CD4-positive, alpha-beta memory T cell (primary cell): ENCODE measurements at regions of chr5 and their contacts with region 1.

Region 1: DNA sequence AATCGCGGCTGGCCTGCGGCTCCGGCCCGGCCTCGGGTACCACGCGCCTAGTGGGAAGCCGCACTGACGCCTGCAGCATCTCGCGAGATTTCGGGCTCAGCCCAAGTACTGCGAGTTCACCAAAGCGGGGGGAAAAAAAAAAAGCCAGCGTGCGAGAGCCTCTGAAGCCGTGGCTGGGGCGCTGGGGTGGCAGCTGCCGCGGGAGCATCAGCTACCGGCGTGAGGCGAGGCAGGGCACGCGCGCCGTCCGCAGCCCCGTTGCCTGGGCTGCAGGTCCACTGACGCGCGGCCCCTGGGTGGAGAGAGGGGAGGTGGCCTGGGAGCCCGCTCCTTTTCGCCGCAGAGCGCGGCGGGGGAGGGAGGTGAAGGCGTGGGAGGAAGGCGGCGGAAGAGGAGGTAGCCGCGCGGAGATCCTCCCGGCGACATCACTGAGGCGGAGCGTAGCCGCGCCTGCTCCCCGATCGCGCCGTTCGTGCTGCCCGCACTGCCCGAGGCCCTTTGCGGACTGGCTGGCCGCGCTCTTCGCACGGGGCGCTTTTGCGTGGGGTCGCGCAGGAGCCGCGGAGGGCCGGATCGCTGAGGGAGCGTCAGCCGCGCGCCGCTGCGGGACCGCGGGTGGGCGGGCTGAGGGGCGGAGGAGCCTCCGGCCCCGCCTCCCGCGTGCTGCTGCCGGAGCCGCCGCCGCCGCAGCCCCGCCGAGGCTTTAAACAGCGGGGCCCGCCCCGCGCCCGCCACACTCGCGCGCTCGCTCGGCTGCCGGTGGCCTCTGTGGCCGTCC is at the start of gene SLC12A2:
- DNase-seq: peak; percentile 94 to 98 (median 97)
- H3K4me3 ChIP-seq: peak within 1 kb of the TSS; percentile 68 to 89
- H3K4me3 Mint-ChIP-seq: peak within 1 kb of the TSS; percentile 89 to 98 (median 94)
- H3K27ac ChIP-seq: peak within 1 kb of the TSS; percentile 88
- H3K27ac Mint-ChIP-seq: peak within 1 kb of the TSS; percentile 87 to 98 (median 97)
- H3K4me1 ChIP-seq: peaks cover 62% of the 10 kb centered on the region
- H3K4me1 Mint-ChIP-seq: peaks cover 51 to 76% (median 61%) of the 10 kb centered on the region in 4 donors
- H3K27me3 ChIP-seq: no peaks in the 10 kb centered on the region
- H3K27me3 Mint-ChIP-seq: no peaks in the 10 kb centered on the region
- total RNA-seq, gene SLC12A2: 13.3 to 13.6 TPM

Region 2: GRCh38 chr5:127030259-127031146 is 1052.7 kb before region 1 on chr5 and contains the start of gene MARCHF3:
- CTCF ChIA-PET with region 1: no interaction called
- POLR2A ChIA-PET with region 1: no interaction called
- intact Hi-C with region 1: loop called (anchors 10 kb)
- DNase-seq: peak; percentile 92 to 95 (median 94)
- H3K4me3 ChIP-seq: peak within 1 kb of the TSS; percentile 51 to 85
- H3K4me3 Mint-ChIP-seq: peak within 1 kb of the TSS; percentile 89 to 94 (median 90)
- H3K27ac ChIP-seq: peak within 1 kb of the TSS; percentile 56
- H3K27ac Mint-ChIP-seq: peak within 1 kb of the TSS; percentile 35 to 91 (median 77)
- H3K4me1 ChIP-seq: peaks cover 16% of the 10 kb centered on the region
- H3K4me1 Mint-ChIP-seq: peaks cover 5 to 17% (median 7%) of the 10 kb centered on the region in 4 donors
- H3K27me3 ChIP-seq: no peaks in the 10 kb centered on the region
- H3K27me3 Mint-ChIP-seq: peaks cover 0 to 17% of the 10 kb centered on the region in 2 donors
- total RNA-seq, gene MARCHF3: 3.2 to 3.3 TPM

Region 3: GRCh38 chr5:127875235-127876021 is 207.8 kb before region 1 on chr5:
- CTCF ChIA-PET with region 1: interaction called, 10 read pairs
- POLR2A ChIA-PET with region 1: interaction called, 8 read pairs
- intact Hi-C with region 1: loop called (anchors 2 kb)
- DNase-seq: peak in 4 of 5 donors; percentile 7 to 10 (median 9)
- H3K4me3 ChIP-seq: no peak overlapping the region
- H3K4me3 Mint-ChIP-seq: no peak overlapping the region
- H3K27ac ChIP-seq: no peak overlapping the region
- H3K27ac Mint-ChIP-seq: no peak overlapping the region
- H3K4me1 ChIP-seq: no peaks in the 10 kb centered on the region
- H3K4me1 Mint-ChIP-seq: no peaks in the 10 kb centered on the region
- H3K27me3 ChIP-seq: no peaks in the 10 kb centered on the region
- H3K27me3 Mint-ChIP-seq: peaks cover 0 to 4% of the 10 kb centered on the region in 2 donors

Region 4: DNA sequence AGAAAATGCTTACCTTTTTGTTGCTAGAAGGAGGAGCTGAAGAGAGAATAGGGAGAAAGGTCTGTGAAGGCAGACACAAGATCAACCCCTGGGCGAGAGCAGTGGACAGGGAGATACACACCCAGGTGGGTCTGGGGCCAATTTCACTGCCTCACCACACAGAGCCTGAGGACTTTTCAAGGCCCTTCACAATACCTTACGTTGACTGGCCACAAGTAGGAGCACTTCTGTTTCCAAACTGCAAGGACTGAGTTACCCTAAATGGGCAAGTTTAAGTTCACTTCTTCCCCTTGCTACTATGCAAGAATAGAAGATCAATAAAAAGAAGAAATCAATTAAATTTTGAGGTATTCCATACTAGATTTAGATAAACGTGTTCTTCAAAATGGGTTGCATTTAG is 174.1 kb before region 1 on chr5:
- CTCF ChIA-PET with region 1: no interaction called
- POLR2A ChIA-PET with region 1: no interaction called
- intact Hi-C with region 1: loop called (anchors 1 kb)
- DNase-seq: peak in 1 of 5 donors; percentile 22
- H3K4me3 ChIP-seq: no peak overlapping the region
- H3K4me3 Mint-ChIP-seq: no peak overlapping the region
- H3K27ac ChIP-seq: no peak overlapping the region
- H3K27ac Mint-ChIP-seq: no peak overlapping the region
- H3K4me1 ChIP-seq: no peaks in the 10 kb centered on the region
- H3K4me1 Mint-ChIP-seq: peaks cover 0 to 5% (median under 1%) of the 10 kb centered on the region in 4 donors
- H3K27me3 ChIP-seq: no peaks in the 10 kb centered on the region
- H3K27me3 Mint-ChIP-seq: peaks cover 1 to 3% of the 10 kb centered on the region in 2 donors

Region 5: DNA sequence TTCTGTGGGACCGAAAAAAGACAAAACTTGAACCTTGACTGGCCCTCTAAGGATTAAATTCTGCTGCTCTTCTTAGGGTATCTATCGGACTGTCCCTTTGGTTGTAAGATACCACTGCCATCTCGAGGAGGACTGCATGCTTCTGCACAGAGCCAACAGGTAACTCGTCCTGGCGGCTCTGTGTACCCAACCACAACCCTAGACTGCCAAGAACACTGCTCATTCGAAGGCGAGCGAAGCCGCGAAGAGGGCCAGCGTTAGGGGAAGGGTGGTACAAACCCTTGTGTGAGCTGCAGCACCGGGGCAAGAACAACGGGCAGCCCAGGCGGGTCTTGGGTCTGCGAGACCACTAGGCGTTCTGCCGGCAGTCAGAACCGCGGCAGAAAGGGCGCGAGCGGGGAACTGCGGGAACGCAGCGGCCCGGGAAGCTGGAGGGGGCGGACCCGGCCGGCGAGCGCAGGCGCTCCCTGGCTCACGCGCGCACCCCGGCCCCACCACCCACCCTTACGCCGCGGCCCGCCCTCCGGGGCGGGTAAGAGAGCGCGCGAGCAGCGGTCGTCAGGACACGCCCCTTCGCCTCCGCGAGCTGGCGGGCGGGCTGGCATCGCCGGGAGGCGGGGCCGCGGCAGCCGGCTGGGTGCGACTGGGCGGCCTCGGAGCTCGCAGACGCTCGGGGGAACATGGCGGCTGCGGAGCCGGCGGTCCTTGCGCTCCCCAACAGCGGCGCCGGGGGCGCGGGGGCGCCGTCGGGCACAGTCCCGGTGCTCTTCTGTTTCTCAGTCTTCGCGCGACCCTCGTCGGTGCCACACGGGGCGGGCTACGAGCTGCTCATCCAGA is 1011.1 kb after region 1 on chr5 and contains the start of gene ISOC1:
- CTCF ChIA-PET with region 1: no interaction called
- POLR2A ChIA-PET with region 1: interaction called, 4 read pairs
- intact Hi-C with region 1: loop called (anchors 1 kb)
- DNase-seq: peak; percentile 88 to 95 (median 93)
- H3K4me3 ChIP-seq: peak within 1 kb of the TSS; percentile 69 to 83
- H3K4me3 Mint-ChIP-seq: peak within 1 kb of the TSS; percentile 89 to 94 (median 92)
- H3K27ac ChIP-seq: peak within 1 kb of the TSS; percentile 65
- H3K27ac Mint-ChIP-seq: peak within 1 kb of the TSS; percentile 85 to 93 (median 92)
- H3K4me1 ChIP-seq: peaks cover 41% of the 10 kb centered on the region
- H3K4me1 Mint-ChIP-seq: peaks cover 22 to 39% (median 30%) of the 10 kb centered on the region in 4 donors
- H3K27me3 ChIP-seq: no peaks in the 10 kb centered on the region
- H3K27me3 Mint-ChIP-seq: peaks cover 0 to 5% of the 10 kb centered on the region in 2 donors
- total RNA-seq, gene ISOC1: 13.7 to 16.6 TPM